ENCODE measurements at regions of chr9 and their contacts with region 1.

Region 1: DNA sequence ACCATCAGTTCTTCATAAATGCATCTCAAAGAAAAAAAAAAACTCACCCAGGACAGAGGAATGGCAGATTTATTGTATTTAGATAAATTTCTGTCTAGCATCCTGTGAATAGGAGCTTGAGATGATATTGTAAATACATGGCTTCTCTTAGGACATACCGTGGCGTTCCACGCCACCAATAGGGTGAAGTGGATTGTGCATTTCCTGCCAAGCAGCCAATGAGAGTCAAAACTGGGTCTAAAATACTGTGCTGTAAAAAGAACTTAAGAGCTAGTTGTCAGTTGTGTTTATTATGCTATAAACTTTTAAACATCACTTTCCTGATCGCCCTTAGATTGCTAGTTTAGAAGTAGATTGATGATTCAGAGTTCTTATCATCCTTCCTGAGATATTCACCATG is 20.9 kb upstream of the TRPM6 start:
- DNase-seq: no peak
- H3K4me3 ChIP-seq: no peak overlapping the region
- H3K27ac ChIP-seq: no peak overlapping the region
- H3K4me1 ChIP-seq: no peaks in the 10 kb centered on the region
- H3K27me3 ChIP-seq: peaks cover 0 to 6% of the 10 kb centered on the region in 2 donors
- CTCF ChIP-seq: no peak

Region 2: GRCh38 chr9:74795803-74796202 is 112.9 kb before region 1 on chr9:
- intact Hi-C with region 1: loop called (anchors 10 kb)
- DNase-seq: no peak
- H3K4me3 ChIP-seq: no peak overlapping the region
- H3K27ac ChIP-seq: no peak overlapping the region
- H3K4me1 ChIP-seq: no peaks in the 10 kb centered on the region
- H3K27me3 ChIP-seq: no peaks in the 10 kb centered on the region
- CTCF ChIP-seq: no peak

Region 3: GRCh38 chr9:75170898-75171360 is 262.3 kb after region 1 on chr9:
- intact Hi-C with region 1: no loop called
- DNase-seq: no peak
- H3K4me3 ChIP-seq: no peak overlapping the region
- H3K27ac ChIP-seq: no peak overlapping the region
- H3K4me1 ChIP-seq: no peaks in the 10 kb centered on the region
- H3K27me3 ChIP-seq: no peaks in the 10 kb centered on the region
- CTCF ChIP-seq: no peak